Lower leg skin (tissue), 4 donors: ENCODE measurements at regions of chr5 and their contacts with region 1.

Region 1: DNA sequence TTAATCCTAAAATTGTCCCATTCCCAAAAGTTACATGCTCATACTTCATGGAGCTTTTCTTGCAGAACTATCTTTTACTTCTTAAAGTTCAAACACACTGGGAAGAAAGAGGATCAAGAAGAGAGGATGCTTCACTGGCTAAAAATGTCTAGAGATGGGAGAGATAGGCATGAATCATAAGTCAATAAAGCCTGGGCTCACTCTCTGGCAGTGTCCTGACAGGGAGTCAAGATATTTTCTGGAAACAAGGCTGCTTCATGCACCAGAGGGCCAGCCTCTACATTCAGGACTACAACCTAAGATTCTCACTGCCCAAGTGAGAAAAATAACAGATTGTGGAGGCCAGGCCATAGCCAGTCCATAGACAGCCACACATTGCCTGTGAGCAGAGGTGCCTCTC is 1358.4 kb downstream of the EFNA5 start:
- DNase-seq: no peak
- H3K4me3 ChIP-seq: no peak overlapping the region
- CTCF ChIP-seq: no peak
- POLR2A ChIP-seq: no peak

Region 2: GRCh38 chr5:106290841-106291240 is 21.5 kb before region 1 on chr5:
- intact Hi-C with region 1: no loop called
- DNase-seq: no peak
- H3K4me3 ChIP-seq: no peak overlapping the region
- CTCF ChIP-seq: no peak
- POLR2A ChIP-seq: no peak

Region 3: DNA sequence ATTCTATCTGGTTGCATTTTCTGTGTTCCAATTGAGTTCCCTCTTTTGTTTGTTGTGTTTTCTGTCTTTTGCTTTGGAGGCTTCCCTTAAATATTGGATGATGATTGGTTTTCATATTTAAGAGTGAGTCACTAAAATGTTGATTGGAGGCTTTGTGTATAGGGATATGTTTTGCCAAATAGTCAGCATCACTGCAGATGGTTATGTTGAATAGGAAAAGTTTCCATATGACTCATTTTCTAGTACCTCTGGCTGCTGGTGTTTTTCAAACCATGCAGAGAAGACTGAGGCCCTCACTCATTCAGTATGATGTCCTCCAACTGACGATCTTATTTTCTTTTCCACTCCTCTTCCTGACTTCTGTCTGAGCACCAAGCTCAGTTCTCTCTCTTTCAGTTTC is 68.4 kb after region 1 on chr5:
- intact Hi-C with region 1: no loop called
- DNase-seq: no peak
- H3K4me3 ChIP-seq: no peak overlapping the region
- CTCF ChIP-seq: no peak
- POLR2A ChIP-seq: no peak

Region 4: DNA sequence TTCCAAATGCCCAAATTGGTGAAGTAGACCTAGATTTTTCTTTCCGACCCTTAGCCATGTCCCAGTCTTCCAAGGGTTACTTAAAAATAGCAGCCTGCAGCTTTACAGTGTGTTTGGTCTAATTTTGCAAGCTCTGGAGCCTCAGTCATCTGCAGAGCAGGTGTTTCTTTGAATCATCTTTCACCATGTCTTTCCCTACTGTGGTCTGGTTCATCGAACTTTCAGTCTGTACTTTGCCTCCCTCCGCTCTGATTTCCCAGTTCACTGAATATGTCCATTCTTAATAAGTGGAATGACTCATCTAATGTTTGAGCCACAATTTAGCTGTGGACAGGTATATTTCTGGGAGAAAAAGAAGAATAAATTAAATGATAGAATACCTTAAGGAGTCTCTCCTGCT is 297.7 kb after region 1 on chr5:
- intact Hi-C with region 1: no loop called
- DNase-seq: no peak
- H3K4me3 ChIP-seq: no peak overlapping the region
- CTCF ChIP-seq: no peak
- POLR2A ChIP-seq: no peak

Region 5: DNA sequence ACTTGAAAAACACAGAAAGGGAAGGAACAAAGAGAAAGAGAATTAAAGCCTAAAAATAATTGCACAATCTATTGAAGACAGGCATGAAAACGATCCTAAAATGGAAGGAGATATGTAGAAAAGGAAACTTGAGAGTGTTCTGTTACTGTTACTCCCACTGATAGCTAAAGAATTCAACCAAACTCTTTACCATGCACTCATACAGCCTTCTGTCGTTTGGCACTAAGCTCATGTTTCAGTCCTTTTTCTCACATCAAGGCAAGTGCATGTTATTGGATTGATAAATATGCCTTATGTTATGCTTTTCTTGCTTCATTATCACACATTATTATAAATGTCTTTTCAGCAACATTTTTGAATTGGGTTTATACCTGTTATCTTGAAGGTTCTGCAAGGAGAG is 661.9 kb after region 1 on chr5:
- intact Hi-C with region 1: loop called (anchors 5 kb)
- DNase-seq: no peak
- H3K4me3 ChIP-seq: no peak overlapping the region
- CTCF ChIP-seq: no peak
- POLR2A ChIP-seq: no peak